Activated CD4-positive, alpha-beta memory T cell treated with anti-CD3 and anti-CD28 coated beads for 36 hours (primary cell): ENCODE measurements at regions of chr2 and their contacts with region 1.

Region 1: DNA sequence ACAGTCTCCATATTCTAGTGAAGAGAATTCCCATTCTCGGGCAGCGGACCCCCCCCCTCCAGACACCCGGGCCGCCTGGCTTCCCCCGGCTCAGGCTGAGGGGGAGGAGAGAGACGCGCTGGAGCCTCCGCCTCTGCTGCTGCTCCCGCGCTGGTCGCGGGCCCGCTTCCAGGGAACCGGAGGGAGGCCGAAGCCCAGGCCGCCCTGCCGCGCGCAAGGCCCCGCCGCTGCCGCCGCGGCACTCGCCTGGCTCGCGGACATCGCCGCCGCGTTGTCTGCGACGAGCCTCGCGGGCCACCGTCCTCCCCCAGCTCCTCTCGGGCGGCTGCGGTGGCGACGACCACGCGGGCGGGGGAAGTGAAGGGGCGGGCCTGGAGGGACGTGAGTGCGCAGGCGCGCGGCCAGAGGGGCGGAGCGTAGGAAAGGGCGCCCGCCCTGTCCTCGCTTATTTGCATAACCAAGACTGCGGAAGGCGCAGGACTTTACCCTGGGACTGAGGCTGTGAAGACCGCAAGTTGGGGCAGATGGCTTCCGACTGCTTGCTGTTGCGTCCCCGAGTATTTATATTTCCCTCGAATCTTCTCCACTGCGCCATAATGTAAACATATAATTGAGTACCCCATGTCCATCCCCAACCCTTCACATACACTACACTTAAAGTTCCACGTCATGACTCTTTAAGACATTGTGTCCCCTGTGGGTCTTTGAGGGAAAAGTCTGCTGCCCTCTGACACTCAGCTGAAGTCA is at the start of gene ARL5A:
- DNase-seq: peak; percentile 96
- H3K4me3 Mint-ChIP-seq: peak within 1 kb of the TSS; percentile 93
- H3K27ac Mint-ChIP-seq: peak within 1 kb of the TSS; percentile 79
- H3K4me1 Mint-ChIP-seq: peaks cover 43% of the 10 kb centered on the region
- H3K27me3 Mint-ChIP-seq: no peaks in the 10 kb centered on the region
- total RNA-seq, gene ARL5A: 54.6 to 63.2 TPM

Region 2: GRCh38 chr2:151261231-151261976 is 566.9 kb before region 1 on chr2 and contains the start of gene RBM43:
- CTCF ChIA-PET with region 1: no interaction called
- POLR2A ChIA-PET with region 1: no interaction called
- intact Hi-C with region 1: loop called (anchors 10 kb)
- DNase-seq: peak; percentile 88
- H3K4me3 Mint-ChIP-seq: peak within 1 kb of the TSS; percentile 88
- H3K27ac Mint-ChIP-seq: peak within 1 kb of the TSS; percentile 91
- H3K4me1 Mint-ChIP-seq: peaks cover 15% of the 10 kb centered on the region
- H3K27me3 Mint-ChIP-seq: no peaks in the 10 kb centered on the region
- total RNA-seq, gene RBM43: 3.7 to 3.8 TPM

Region 3: GRCh38 chr2:151481744-151482143 is 346.6 kb before region 1 on chr2:
- CTCF ChIA-PET with region 1: no interaction called
- POLR2A ChIA-PET with region 1: no interaction called
- intact Hi-C with region 1: loop called (anchors 5 kb)
- DNase-seq: peak; percentile 54
- H3K4me3 Mint-ChIP-seq: no peak overlapping the region
- H3K27ac Mint-ChIP-seq: peak overlapping the region; percentile 61
- H3K4me1 Mint-ChIP-seq: peaks cover 32% of the 10 kb centered on the region
- H3K27me3 Mint-ChIP-seq: no peaks in the 10 kb centered on the region

Region 4: GRCh38 chr2:151878655-151879563 is 50.6 kb after region 1 on chr2:
- CTCF ChIA-PET with region 1: no interaction called
- POLR2A ChIA-PET with region 1: no interaction called
- intact Hi-C with region 1: loop called (anchors 5 kb)
- DNase-seq: no peak
- H3K4me3 Mint-ChIP-seq: no peak overlapping the region
- H3K27ac Mint-ChIP-seq: no peak overlapping the region
- H3K4me1 Mint-ChIP-seq: peaks cover 11% of the 10 kb centered on the region
- H3K27me3 Mint-ChIP-seq: no peaks in the 10 kb centered on the region

Region 5: DNA sequence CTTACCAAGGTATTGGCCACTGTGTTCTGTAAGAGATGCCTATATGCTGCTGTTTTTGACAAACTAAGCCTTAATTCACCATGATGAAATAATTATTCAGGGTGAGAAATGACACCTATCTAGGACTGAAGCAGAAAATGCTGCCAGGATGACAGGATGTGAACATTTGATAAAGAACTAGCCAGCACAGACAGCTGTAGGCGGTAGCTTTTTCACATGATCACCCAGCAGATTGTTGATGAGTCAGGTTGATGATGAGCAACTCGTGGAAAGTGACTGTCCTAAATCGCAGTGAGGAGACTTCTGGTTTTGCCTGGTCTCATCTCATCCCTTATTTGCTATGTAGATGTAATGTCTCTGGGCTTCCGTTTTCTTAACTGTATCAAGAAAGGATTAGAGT is 744.9 kb after region 1 on chr2:
- CTCF ChIA-PET with region 1: no interaction called
- POLR2A ChIA-PET with region 1: no interaction called
- intact Hi-C with region 1: loop called (anchors 10 kb)
- DNase-seq: peak; percentile 70
- H3K4me3 Mint-ChIP-seq: no peak overlapping the region
- H3K27ac Mint-ChIP-seq: peak overlapping the region; percentile 35
- H3K4me1 Mint-ChIP-seq: peaks cover 10% of the 10 kb centered on the region
- H3K27me3 Mint-ChIP-seq: peaks cover 14% of the 10 kb centered on the region

Region 6: GRCh38 chr2:152755029-152755428 is 926.7 kb after region 1 on chr2:
- CTCF ChIA-PET with region 1: no interaction called
- POLR2A ChIA-PET with region 1: no interaction called
- intact Hi-C with region 1: no loop called
- DNase-seq: no peak
- H3K4me3 Mint-ChIP-seq: no peak overlapping the region
- H3K27ac Mint-ChIP-seq: no peak overlapping the region
- H3K4me1 Mint-ChIP-seq: peaks cover 13% of the 10 kb centered on the region
- H3K27me3 Mint-ChIP-seq: no peaks in the 10 kb centered on the region

Region 7: DNA sequence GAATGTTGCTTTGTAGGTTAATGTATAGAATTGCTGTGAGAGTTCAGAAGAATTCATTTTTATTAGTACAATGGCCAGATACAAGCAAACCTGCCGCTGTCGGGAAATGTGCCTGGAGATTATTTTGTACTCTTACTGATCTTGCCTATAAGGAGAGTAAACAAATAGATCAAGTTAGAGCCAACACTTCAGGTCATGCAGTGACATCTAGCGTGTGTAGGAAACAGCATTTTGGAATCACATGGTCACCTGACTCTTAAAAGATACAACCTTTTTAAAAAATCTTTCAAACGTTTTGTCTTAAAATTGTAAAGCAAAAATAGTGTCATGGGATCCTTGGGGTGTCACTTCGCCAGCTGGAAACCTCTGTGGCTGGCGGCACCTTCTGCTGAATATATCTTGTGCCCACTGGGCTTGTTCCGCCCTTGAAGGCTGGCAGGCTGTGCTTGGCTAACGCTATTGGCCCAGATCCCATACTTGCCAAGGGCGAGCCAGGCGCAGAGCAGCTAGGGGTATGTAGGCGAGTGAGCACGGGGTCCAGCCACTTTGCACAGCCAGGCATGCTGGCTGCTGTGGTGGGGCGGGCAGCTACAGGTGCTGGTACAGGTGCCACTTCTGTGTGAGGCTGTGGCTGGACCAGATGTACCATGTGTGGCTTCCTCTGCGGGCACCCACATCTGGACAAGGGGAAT is 1669.8 kb after region 1 on chr2:
- CTCF ChIA-PET with region 1: no interaction called
- POLR2A ChIA-PET with region 1: no interaction called
- intact Hi-C with region 1: no loop called
- DNase-seq: no peak
- H3K4me3 Mint-ChIP-seq: no peak overlapping the region
- H3K27ac Mint-ChIP-seq: no peak overlapping the region
- H3K4me1 Mint-ChIP-seq: no peaks in the 10 kb centered on the region
- H3K27me3 Mint-ChIP-seq: no peaks in the 10 kb centered on the region